Natural killer cell (primary cell): ENCODE measurements at regions of chr5 and their contacts with region 1.

Region 1: GRCh38 chr5:95730730-95731570 is at the start of gene RHOBTB3:
- DNase-seq: peak; percentile 55 to 59
- ATAC-seq: peak; percentile 82 to 87 (median 84)
- H3K4me3 ChIP-seq: peak within 1 kb of the TSS; percentile 77
- H3K4me3 Mint-ChIP-seq: peak within 1 kb of the TSS; percentile 94
- H3K27ac ChIP-seq: peak within 1 kb of the TSS; percentile 49
- H3K27ac Mint-ChIP-seq: peak within 1 kb of the TSS; percentile 83 to 92
- H3K4me1 ChIP-seq: peaks cover 8% of the 10 kb centered on the region
- H3K4me1 Mint-ChIP-seq: peaks cover 54 to 72% of the 10 kb centered on the region in 2 donors
- H3K27me3 ChIP-seq: no peaks in the 10 kb centered on the region
- H3K27me3 Mint-ChIP-seq: no peaks in the 10 kb centered on the region
- CTCF ChIP-seq: no peak
- total RNA-seq, gene RHOBTB3: 46.5 to 55.1 (median 46.5) TPM

Region 2: DNA sequence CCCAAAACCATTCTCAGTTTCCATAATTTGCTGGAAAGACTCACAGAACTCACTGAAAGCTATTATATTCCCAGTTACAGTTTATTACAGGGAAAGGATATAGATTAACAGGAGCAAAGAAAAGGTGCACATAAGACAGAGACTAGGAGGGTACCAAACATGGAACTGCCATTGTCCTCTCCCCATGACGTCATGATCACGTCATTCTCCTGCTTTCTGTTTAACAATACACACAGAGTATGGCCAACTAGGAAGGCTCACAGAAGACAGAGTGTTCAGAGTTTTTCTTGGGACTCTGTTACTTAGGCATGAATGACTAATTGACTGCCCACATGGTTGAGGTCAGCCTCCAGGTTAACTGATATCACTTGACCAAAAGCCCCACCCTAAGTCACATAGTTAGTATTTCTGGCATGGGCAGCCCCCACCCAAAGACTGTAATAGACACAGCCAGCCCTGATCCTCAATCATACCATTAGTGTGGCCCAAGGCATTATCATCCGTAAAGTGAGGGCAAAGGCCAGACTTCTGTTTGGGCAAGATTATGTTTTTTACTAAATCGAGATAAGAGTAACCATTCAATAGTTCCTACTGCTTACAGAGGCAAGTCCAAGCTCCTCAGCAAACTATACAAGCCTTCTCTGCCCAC is 1636.0 kb before region 1 on chr5:
- intact Hi-C with region 1: no loop called
- DNase-seq: no peak
- ATAC-seq: no peak
- H3K4me3 ChIP-seq: no peak overlapping the region
- H3K4me3 Mint-ChIP-seq: no peak overlapping the region
- H3K27ac ChIP-seq: no peak overlapping the region
- H3K27ac Mint-ChIP-seq: no peak overlapping the region
- H3K4me1 ChIP-seq: no peaks in the 10 kb centered on the region
- H3K4me1 Mint-ChIP-seq: peaks cover 56 to 64% of the 10 kb centered on the region in 2 donors
- H3K27me3 ChIP-seq: no peaks in the 10 kb centered on the region
- H3K27me3 Mint-ChIP-seq: no peaks in the 10 kb centered on the region
- CTCF ChIP-seq: no peak

Region 3: GRCh38 chr5:95369771-95370170 is 361.2 kb before region 1 on chr5:
- intact Hi-C with region 1: no loop called
- DNase-seq: no peak
- ATAC-seq: no peak
- H3K4me3 ChIP-seq: no peak overlapping the region
- H3K4me3 Mint-ChIP-seq: no peak overlapping the region
- H3K27ac ChIP-seq: no peak overlapping the region
- H3K27ac Mint-ChIP-seq: no peak overlapping the region
- H3K4me1 ChIP-seq: no peaks in the 10 kb centered on the region
- H3K4me1 Mint-ChIP-seq: no peaks in the 10 kb centered on the region
- H3K27me3 ChIP-seq: no peaks in the 10 kb centered on the region
- H3K27me3 Mint-ChIP-seq: peaks cover 0 to 4% of the 10 kb centered on the region in 2 donors
- CTCF ChIP-seq: no peak

Region 4: DNA sequence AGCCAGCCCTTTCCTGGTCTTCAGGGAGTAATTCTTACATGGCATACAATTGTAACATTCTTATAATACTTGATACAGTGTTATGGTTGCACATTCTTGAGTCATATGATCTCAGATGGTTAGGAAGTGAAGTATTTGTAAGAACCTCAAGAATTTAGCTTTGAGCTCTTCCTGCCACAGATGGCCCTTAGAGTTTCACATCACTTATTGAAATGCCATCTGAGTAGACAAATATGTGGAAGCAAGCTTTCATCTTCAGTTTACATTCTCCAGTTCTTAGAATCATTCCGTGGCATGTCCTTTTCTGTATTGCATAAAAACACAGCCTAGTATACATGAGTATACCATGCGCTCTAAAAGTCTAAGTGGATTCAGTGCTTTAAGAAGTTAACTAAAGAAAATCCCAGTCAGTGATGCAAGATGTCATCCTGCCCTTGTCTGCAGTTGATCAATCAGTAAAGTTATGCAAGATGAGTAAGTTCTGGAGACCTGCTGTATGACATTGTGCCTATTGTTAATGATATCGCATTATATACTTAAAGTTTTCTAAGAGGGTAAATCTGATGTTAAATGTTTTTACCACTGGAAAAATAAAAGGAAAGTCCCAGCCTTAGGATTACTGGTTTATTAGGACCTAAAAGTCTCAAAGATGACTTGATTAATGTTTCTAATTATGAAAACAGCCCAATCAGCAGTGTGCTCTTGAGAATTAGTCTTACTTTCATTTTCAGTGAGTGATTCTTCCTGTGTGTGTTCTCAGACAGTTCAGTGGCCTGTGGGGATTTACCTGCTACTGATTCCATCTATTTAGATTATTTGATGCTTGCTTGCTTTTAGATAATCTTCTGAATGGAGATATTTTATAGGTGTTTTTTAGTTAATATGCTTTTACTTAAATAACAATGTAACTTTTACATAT is 29.6 kb after region 1 on chr5:
- intact Hi-C with region 1: loop called (anchors 2 kb)
- DNase-seq: peak in 1 of 2 donors; percentile 63
- ATAC-seq: peak; percentile 75 to 85 (median 77)
- H3K4me3 ChIP-seq: peak overlapping the region; percentile 23
- H3K4me3 Mint-ChIP-seq: peak overlapping the region; percentile 89
- H3K27ac ChIP-seq: peak overlapping the region; percentile 67
- H3K27ac Mint-ChIP-seq: peak overlapping the region; percentile 93 to 96
- H3K4me1 ChIP-seq: peaks cover 24% of the 10 kb centered on the region
- H3K4me1 Mint-ChIP-seq: peaks cover 50 to 56% of the 10 kb centered on the region in 2 donors
- H3K27me3 ChIP-seq: no peaks in the 10 kb centered on the region
- H3K27me3 Mint-ChIP-seq: no peaks in the 10 kb centered on the region
- CTCF ChIP-seq: no peak

Region 5: GRCh38 chr5:95781101-95781583 is 50.2 kb after region 1 on chr5:
- intact Hi-C with region 1: loop called (anchors 2 kb)
- DNase-seq: peak; percentile 54 to 88
- ATAC-seq: peak; percentile 88 to 94 (median 94)
- H3K4me3 ChIP-seq: no peak overlapping the region
- H3K4me3 Mint-ChIP-seq: peak overlapping the region; percentile 51
- H3K27ac ChIP-seq: no peak overlapping the region
- H3K27ac Mint-ChIP-seq: peak overlapping the region; percentile 76 to 79
- H3K4me1 ChIP-seq: peaks cover 13% of the 10 kb centered on the region
- H3K4me1 Mint-ChIP-seq: peaks cover 23 to 24% of the 10 kb centered on the region in 2 donors
- H3K27me3 ChIP-seq: no peaks in the 10 kb centered on the region
- H3K27me3 Mint-ChIP-seq: no peaks in the 10 kb centered on the region
- CTCF ChIP-seq: peak; percentile 94